ENCODE measurements at regions of chr6 and their contacts with region 1.

Region 1: DNA sequence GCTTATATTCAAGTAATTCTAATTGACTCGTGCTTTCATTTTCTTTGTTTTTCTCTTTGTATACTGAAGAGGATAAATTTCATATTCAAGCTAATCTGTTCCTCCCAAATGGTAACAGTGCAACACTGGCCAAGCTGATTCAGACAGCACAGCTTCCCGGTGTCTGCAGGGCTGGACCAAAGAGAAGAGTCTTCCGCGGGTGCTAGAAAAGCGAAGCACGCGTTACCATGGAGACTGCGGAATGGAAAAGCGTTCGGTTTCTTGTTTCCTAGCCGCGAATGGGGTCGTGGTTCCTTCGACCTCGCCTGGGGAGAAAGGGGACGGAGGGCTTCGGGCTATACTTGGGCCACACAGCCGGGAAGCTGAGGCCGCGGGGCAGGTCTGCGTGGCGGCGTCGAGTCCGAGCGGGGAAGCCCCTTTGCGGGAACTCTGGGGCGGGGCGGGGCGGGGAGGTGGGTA is 6.2 kb upstream of the ZNF311 start:
- DNase-seq: no peak

Region 2: GRCh38 chr6:28693033-28693750 is 318.1 kb before region 1 on chr6:
- intact Hi-C with region 1: loop called (anchors 5 kb)
- DNase-seq: no peak

Region 3: GRCh38 chr6:28838634-28839442 is 172.5 kb before region 1 on chr6:
- intact Hi-C with region 1: loop called in 1 of 2 experiments (anchors 5 kb)
- DNase-seq: peak; percentile 94

Measured in posterior vena cava (tissue), 2 donors.